GM12878 (cell line): ENCODE measurements at regions of chr18 and their contacts with region 1.

Region 1: DNA sequence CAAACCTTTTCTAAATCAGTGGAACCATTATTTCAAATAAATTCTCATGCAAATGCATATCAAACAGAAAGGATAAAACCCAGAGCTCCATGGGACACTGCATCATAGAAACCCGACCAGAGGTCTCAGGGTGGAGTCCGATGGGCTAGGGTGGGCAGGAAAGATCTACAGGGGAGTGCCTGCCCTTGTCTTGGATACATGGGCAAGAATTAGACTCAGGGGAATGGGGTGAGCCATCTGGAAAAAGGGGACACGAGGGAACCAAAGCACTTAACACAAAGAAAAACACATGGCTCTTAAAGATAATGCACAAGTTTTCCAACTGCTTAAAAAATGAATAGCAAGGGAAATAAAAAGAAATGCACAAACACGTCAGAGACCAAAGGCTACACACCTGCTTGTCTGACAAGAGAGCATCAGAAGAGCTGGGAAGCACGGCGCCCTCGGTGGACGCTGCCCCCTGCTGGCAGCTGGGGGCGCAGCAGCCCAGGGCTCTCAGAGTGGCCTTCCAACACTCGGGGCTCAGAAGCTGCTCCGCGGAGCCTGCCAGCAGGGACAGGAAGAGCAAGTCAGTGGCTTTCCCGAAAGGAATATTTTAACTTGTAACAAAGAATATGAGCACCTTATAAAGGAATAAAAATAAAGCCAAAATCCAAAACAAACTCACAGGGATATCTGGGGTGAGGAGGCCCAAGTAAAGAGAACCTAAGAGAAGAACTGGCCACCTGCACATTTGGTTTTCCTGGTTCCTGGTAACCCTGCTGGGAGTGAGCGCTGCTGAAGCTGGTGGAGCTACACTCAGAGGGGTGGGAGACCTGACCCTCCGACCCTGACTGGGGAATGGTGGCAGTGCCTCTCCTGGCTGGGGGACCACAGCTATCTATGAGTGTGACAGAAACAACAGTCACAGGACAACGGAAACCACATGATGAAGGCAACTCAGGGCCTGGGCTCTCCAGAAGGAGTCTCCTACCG is 54.5 kb downstream of the SIGLEC15 start:
- DNase-seq: peak; percentile 17
- ATAC-seq: peak; percentile 96
- H3K4me3 ChIP-seq: no peak overlapping the region
- H3K27ac ChIP-seq: no peak overlapping the region
- H3K4me1 ChIP-seq: peaks cover 5% of the 10 kb centered on the region; the same call in 1 of the 2 replicates
- H3K27me3 ChIP-seq: no peaks in the 10 kb centered on the region
- CTCF ChIP-seq: peak; percentile 95 to 99 (median 99)
- EP300 ChIP-seq: no peak
- POLR2A ChIP-seq: no peak
- RAD21 ChIP-seq: peak; percentile 93

Region 2: DNA sequence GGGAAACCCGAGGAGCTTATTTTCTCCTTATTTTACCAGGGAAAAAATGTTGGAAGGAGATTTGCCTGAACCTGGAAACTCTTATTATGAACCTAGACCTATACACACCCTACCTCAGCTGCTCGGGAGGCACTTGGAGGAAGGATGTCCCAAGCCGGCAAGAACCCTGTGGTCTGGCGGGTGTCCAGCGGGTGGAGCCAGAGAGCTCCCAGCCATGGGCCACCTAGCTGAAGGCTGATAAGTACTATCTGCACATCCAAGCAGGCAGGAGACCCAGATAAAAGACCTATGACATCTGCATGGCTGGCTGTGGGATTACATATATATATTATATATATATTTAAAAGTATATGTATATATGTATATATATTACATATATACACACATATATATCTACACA is 157.1 kb before region 1 on chr18:
- CTCF ChIA-PET with region 1: interaction called, 189 read pairs
- POLR2A ChIA-PET with region 1: no interaction called
- RAD21 ChIA-PET with region 1: interaction called, 87 read pairs
- SMC1A ChIA-PET with region 1: interaction called, 162 read pairs
- in situ Hi-C with region 1: no loop called
- intact Hi-C with region 1: loop called (anchors 1 kb)
- DNase-seq: peak; percentile 27
- ATAC-seq: peak; percentile 100
- H3K4me3 ChIP-seq: no peak overlapping the region
- H3K27ac ChIP-seq: no peak overlapping the region
- H3K4me1 ChIP-seq: no peaks in the 10 kb centered on the region
- H3K27me3 ChIP-seq: no peaks in the 10 kb centered on the region
- CTCF ChIP-seq: peak; percentile 74 to 93 (median 77)
- EP300 ChIP-seq: no peak
- POLR2A ChIP-seq: no peak
- RAD21 ChIP-seq: peak; percentile 78

Region 3: GRCh38 chr18:45802608-45803492 is 77.1 kb before region 1 on chr18:
- CTCF ChIA-PET with region 1: interaction called, 23 read pairs
- POLR2A ChIA-PET with region 1: interaction called, 3 read pairs
- RAD21 ChIA-PET with region 1: no interaction called
- SMC1A ChIA-PET with region 1: interaction called, 6 read pairs
- in situ Hi-C with region 1: no loop called
- intact Hi-C with region 1: no loop called
- DNase-seq: no peak
- ATAC-seq: no peak
- H3K4me3 ChIP-seq: no peak overlapping the region
- H3K27ac ChIP-seq: no peak overlapping the region
- H3K4me1 ChIP-seq: no peaks in the 10 kb centered on the region
- H3K27me3 ChIP-seq: no peaks in the 10 kb centered on the region
- CTCF ChIP-seq: no peak
- EP300 ChIP-seq: no peak
- POLR2A ChIP-seq: no peak
- RAD21 ChIP-seq: no peak

Region 4: DNA sequence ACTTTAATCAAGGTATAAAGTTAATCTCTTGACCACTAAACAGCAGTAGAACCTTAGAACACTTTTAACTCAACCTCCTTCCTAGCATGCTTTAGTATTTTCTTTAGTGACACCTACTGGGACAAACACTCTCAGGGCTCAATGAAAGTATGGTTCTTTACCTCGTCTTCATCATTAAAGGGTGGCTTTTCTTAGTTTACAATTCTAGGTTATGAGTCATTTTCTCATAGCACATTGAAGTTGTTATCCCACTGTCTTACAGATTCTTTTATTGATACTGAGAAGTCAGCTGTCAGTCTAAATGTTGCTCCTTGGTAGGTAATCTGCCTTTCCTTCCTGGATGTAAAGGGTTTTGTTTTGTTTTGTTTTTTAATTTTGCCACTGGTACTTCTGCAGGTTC is 16.5 kb before region 1 on chr18:
- CTCF ChIA-PET with region 1: interaction called, 81 read pairs
- POLR2A ChIA-PET with region 1: no interaction called
- RAD21 ChIA-PET with region 1: interaction called, 6 read pairs
- SMC1A ChIA-PET with region 1: interaction called, 6 read pairs
- in situ Hi-C with region 1: no loop called
- intact Hi-C with region 1: no loop called
- DNase-seq: no peak
- ATAC-seq: no peak
- H3K4me3 ChIP-seq: no peak overlapping the region
- H3K27ac ChIP-seq: no peak overlapping the region
- H3K4me1 ChIP-seq: no peaks in the 10 kb centered on the region
- H3K27me3 ChIP-seq: no peaks in the 10 kb centered on the region
- CTCF ChIP-seq: no peak
- EP300 ChIP-seq: no peak
- POLR2A ChIP-seq: no peak
- RAD21 ChIP-seq: no peak

Region 5: GRCh38 chr18:46239549-46239948 is 359.6 kb after region 1 on chr18:
- CTCF ChIA-PET with region 1: no interaction called
- POLR2A ChIA-PET with region 1: no interaction called
- RAD21 ChIA-PET with region 1: no interaction called
- SMC1A ChIA-PET with region 1: no interaction called
- in situ Hi-C with region 1: no loop called
- intact Hi-C with region 1: no loop called
- DNase-seq: no peak
- ATAC-seq: no peak
- H3K4me3 ChIP-seq: no peak overlapping the region
- H3K27ac ChIP-seq: no peak overlapping the region
- H3K4me1 ChIP-seq: no peaks in the 10 kb centered on the region
- H3K27me3 ChIP-seq: no peaks in the 10 kb centered on the region
- CTCF ChIP-seq: no peak
- EP300 ChIP-seq: no peak
- POLR2A ChIP-seq: no peak
- RAD21 ChIP-seq: no peak